ENCODE measurements at regions of chr10 and their contacts with region 1.

Region 1: GRCh38 chr10:70445718-70446657 is 4.5 kb upstream of the NODAL start:
- DNase-seq: no peak
- H3K4me3 ChIP-seq: no peak overlapping the region
- H3K27ac ChIP-seq: no peak overlapping the region
- H3K4me1 ChIP-seq: peaks cover 10 to 26% (median 21%) of the 10 kb centered on the region in 4 experiments
- H3K27me3 ChIP-seq: peaks cover 5 to 21% (median 17%) of the 10 kb centered on the region in 4 experiments; a peak in 6 of 7 replicates
- CTCF ChIP-seq: no peak
- EP300 ChIP-seq: no peak
- POLR2A ChIP-seq: no peak
- RAD21 ChIP-seq: no peak

Region 2: GRCh38 chr10:70324339-70324861 is 121.6 kb before region 1 on chr10:
- CTCF ChIA-PET with region 1: no interaction called
- POLR2A ChIA-PET with region 1: no interaction called
- DNase-seq: no peak
- H3K4me3 ChIP-seq: no peak overlapping the region
- H3K27ac ChIP-seq: no peak overlapping the region
- H3K4me1 ChIP-seq: peaks cover 0 to 17% (median 9%) of the 10 kb centered on the region in 4 experiments; a peak in 6 of 7 replicates
- H3K27me3 ChIP-seq: no peaks in the 10 kb centered on the region
- CTCF ChIP-seq: no peak
- EP300 ChIP-seq: no peak
- POLR2A ChIP-seq: no peak
- RAD21 ChIP-seq: no peak

Region 3: DNA sequence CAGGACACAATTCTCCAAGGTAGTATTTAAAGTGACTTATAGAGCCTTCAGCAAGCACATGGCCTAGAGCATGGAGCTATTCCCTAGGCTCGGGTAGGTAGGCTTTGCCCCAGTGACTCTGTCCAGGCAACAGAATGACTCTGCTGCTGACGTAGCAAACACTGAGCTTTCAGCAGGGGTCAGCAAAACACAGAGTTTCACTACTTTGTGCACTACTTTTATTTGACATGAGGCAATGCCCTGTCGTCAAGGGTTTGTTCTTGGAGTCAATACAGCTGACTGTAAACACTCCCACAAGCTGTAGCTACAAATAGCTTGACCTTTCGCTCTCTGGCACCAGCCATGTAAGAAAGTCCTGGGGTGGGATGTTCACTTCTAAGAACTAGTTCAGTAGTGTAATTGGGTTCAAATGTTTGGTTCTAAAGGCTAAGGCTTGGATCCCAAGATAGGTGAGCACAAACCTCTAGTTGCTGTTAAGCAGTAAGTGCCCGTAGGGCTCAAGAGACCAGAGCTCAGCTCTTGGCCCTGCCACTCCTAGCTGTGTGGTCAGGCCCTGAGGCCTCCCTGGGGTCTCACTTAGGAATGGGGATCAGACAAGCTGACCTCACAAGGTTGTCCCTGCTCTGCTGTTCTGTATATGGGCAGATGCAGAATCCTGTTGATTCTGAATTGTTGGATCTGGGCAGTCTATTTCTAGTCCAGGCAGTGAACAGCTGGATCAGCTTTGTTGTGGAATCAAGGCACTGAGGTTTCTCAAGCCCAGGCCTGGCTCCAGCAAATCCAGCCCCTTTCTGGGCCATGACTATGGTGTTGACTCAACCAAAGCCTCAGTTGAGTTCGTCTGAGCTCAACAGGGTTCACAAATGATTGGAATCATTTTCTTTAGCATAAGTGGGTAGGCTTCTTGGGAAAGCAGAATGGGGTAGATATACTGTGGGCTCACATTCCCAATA is 15.2 kb before region 1 on chr10:
- CTCF ChIA-PET with region 1: interaction called, 10 read pairs
- POLR2A ChIA-PET with region 1: interaction called, 17 read pairs
- DNase-seq: no peak
- H3K4me3 ChIP-seq: no peak overlapping the region
- H3K27ac ChIP-seq: no peak overlapping the region
- H3K4me1 ChIP-seq: no peaks in the 10 kb centered on the region; a peak in 1 of 7 replicates
- H3K27me3 ChIP-seq: no peaks in the 10 kb centered on the region
- CTCF ChIP-seq: peak in 2 of 3 experiments; percentile 30 to 46; a peak in 2 of 4 replicates
- EP300 ChIP-seq: no peak
- POLR2A ChIP-seq: no peak
- RAD21 ChIP-seq: peak; percentile 54 to 66